H1 (cell line): ENCODE measurements at regions of chr1 and their contacts with region 1.

Region 1: GRCh38 chr1:234188454-234188792 is 184.8 kb upstream of the COA6 start:
- DNase-seq: peak; percentile 64 to 85
- H3K4me3 ChIP-seq: no peak overlapping the region
- H3K27ac ChIP-seq: peak overlapping the region; percentile 65; the same call in 1 of the 2 replicates
- H3K4me1 ChIP-seq: peaks cover 0 to 5% (median 2%) of the 10 kb centered on the region in 4 experiments; a peak in 4 of 7 replicates
- H3K27me3 ChIP-seq: no peaks in the 10 kb centered on the region
- CTCF ChIP-seq: peak; percentile 69 to 73 (median 71)
- EP300 ChIP-seq: no peak; a peak in 1 of 3 replicates
- POLR2A ChIP-seq: no peak
- RAD21 ChIP-seq: peak; percentile 53 to 58

Region 2: DNA sequence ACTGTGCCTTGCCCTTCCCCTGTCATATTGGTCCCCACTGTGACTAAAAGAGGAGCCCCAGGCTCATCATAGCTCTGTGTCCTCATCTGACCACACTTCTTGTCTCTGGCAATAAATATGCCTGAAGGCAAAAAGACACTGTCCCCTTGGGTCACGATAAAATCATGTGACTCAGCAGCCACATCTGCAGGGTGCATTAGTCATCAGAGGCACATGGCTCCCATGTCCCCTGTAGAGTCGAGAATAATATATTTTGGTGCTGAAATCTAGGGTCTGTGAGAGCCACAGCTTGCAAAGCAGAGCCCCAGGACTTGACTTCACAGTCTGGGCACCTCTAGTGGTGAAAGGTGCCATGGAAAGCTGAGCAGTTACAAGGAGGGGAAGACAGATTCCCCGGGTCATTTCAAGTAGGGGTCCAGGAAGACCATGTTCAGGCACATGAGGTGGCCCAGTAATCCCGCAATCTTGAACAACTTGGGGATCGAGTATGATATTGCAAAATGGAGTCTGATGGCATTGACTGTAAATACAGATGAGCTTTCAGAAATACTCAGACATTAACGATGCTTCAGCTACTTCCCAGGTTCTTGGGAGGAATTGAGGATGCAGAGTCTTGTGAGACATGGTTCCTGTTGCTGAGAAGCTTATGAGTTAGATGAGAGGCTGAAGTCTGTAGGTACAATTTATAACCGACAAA is 215.3 kb before region 1 on chr1:
- CTCF ChIA-PET with region 1: no interaction called
- POLR2A ChIA-PET with region 1: no interaction called
- DNase-seq: no peak
- H3K4me3 ChIP-seq: no peak overlapping the region
- H3K27ac ChIP-seq: no peak overlapping the region
- H3K4me1 ChIP-seq: no peaks in the 10 kb centered on the region
- H3K27me3 ChIP-seq: no peaks in the 10 kb centered on the region; a peak in 1 of 7 replicates
- CTCF ChIP-seq: peak in 2 of 3 experiments; percentile 5 to 9; a peak in 2 of 4 replicates
- EP300 ChIP-seq: no peak
- POLR2A ChIP-seq: no peak
- RAD21 ChIP-seq: peak in 1 of 2 experiments; percentile 18; a peak in 1 of 4 replicates

Region 3: DNA sequence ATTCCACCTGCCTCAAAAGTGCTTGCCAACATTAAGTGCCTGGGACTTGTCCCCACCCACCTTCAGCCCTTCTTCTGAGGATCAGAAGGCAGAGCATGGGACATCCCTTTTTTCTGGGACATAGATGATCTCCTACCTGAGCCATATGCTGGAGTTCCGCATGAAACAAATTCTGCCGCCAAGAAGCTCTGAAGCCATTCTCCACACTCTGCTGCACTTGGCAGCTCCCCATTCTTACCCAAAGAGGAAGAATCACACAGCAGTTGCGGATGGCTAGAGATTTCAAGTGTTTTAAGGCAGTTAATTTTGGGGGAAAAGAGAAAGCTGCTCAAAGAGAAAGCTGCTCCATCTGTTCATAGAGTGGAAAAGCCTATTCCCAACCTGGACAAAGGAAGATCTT is 12.4 kb before region 1 on chr1:
- CTCF ChIA-PET with region 1: interaction called, 34 read pairs
- POLR2A ChIA-PET with region 1: interaction called, 4 read pairs
- DNase-seq: no peak
- H3K4me3 ChIP-seq: no peak overlapping the region
- H3K27ac ChIP-seq: no peak overlapping the region
- H3K4me1 ChIP-seq: no peaks in the 10 kb centered on the region; a peak in 3 of 7 replicates
- H3K27me3 ChIP-seq: no peaks in the 10 kb centered on the region
- CTCF ChIP-seq: no peak
- EP300 ChIP-seq: no peak
- POLR2A ChIP-seq: no peak
- RAD21 ChIP-seq: no peak

Region 4: GRCh38 chr1:234222561-234223280 is 34.3 kb after region 1 on chr1:
- CTCF ChIA-PET with region 1: no interaction called
- POLR2A ChIA-PET with region 1: no interaction called
- DNase-seq: no peak
- H3K4me3 ChIP-seq: no peak overlapping the region
- H3K27ac ChIP-seq: no peak overlapping the region
- H3K4me1 ChIP-seq: peaks cover 2 to 10% (median 8%) of the 10 kb centered on the region in 4 experiments; a peak in 6 of 7 replicates
- H3K27me3 ChIP-seq: no peaks in the 10 kb centered on the region; a peak in 1 of 7 replicates
- CTCF ChIP-seq: no peak
- EP300 ChIP-seq: no peak
- POLR2A ChIP-seq: no peak
- RAD21 ChIP-seq: no peak

Region 5: DNA sequence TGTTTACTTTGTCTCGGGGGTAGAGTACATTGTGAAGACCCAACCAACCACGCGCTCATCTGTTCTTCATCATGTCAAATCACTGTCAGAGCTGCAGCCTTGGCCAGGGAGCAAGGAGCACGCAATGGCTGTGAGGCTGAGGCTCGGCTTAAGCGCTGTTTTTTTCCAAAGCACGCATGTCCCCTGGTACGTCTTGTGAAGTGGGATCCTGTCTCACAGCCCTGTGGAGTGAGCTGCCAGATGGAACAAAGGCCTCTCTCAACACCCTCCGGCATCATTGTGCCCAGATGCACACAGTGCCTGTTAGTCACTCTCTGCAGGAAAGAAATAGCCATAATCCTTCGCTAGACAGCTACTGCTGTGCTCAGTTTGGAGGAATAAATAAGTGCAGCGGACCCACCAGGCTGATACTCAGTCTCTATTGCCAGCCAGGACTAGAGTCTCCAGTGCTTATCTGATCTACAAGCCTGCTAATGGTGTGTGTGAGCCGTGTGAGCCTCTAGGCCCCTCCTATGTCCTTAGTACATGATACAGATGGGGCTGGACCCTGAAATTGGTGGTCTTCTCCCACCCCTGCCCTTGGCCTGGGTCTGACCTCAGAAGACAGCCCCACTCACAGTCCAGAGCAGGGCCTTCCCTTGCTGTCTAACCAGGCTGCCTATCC is 93.5 kb after region 1 on chr1:
- CTCF ChIA-PET with region 1: no interaction called
- POLR2A ChIA-PET with region 1: no interaction called
- DNase-seq: no peak
- H3K4me3 ChIP-seq: no peak overlapping the region
- H3K27ac ChIP-seq: no peak overlapping the region
- H3K4me1 ChIP-seq: peaks cover 0 to 5% (median 3%) of the 10 kb centered on the region in 4 experiments; a peak in 4 of 7 replicates
- H3K27me3 ChIP-seq: no peaks in the 10 kb centered on the region
- CTCF ChIP-seq: no peak
- EP300 ChIP-seq: no peak
- POLR2A ChIP-seq: no peak
- RAD21 ChIP-seq: no peak

Region 6: GRCh38 chr1:234302354-234302962 is 114.0 kb after region 1 on chr1:
- CTCF ChIA-PET with region 1: no interaction called
- POLR2A ChIA-PET with region 1: no interaction called
- DNase-seq: no peak
- H3K4me3 ChIP-seq: no peak overlapping the region
- H3K27ac ChIP-seq: no peak overlapping the region
- H3K4me1 ChIP-seq: no peaks in the 10 kb centered on the region
- H3K27me3 ChIP-seq: no peaks in the 10 kb centered on the region
- CTCF ChIP-seq: no peak
- EP300 ChIP-seq: no peak
- POLR2A ChIP-seq: no peak
- RAD21 ChIP-seq: no peak